Activated CD4-positive, alpha-beta memory T cell treated with anti-CD3 and anti-CD28 coated beads for 36 hours (primary cell): ENCODE measurements at regions of chr6 and their contacts with region 1.

Region 1: DNA sequence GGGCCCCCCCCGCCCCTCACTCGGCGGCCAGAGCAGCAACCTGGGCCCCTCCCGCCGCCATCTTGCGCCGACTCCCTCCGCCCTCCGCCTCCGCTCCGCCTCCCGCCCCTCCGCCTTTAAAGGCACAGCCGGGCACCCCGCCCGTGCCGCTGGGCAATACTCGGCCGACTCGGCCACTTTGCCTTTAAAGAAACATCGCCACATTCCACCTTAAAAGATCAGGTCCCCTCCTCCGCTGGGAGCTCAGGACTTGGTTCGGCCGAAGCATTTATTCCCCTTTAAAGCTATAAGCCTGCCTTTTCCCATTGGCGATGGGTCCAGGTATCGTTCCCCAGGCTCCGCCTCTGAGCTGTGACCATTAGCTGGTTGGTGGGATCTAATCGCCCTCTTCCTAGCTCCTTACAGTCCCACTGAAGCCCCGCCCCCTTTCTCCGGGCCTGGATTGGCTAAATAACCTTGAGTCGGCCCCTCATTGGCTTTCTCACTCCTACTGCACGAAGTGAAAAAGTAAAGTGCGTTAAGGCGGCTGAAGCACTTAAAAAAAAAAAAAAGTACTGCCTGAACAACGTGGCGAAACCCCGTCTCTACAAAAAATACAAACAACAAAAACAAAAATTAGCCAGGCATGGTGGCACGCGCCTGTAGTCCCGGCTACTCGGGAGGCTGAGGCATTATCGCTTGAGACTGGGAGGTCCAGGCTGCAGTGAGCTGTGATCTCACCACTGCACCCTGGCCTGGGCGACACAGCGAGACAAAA is at the start of gene ZBTB22:
- DNase-seq: peak; percentile 97
- H3K4me3 Mint-ChIP-seq: peak within 1 kb of the TSS; percentile 94
- H3K27ac Mint-ChIP-seq: peak within 1 kb of the TSS; percentile 95
- H3K4me1 Mint-ChIP-seq: peaks cover 71% of the 10 kb centered on the region
- H3K27me3 Mint-ChIP-seq: no peaks in the 10 kb centered on the region
- total RNA-seq, gene ZBTB22: 11.0 to 12.1 TPM

Region 2: DNA sequence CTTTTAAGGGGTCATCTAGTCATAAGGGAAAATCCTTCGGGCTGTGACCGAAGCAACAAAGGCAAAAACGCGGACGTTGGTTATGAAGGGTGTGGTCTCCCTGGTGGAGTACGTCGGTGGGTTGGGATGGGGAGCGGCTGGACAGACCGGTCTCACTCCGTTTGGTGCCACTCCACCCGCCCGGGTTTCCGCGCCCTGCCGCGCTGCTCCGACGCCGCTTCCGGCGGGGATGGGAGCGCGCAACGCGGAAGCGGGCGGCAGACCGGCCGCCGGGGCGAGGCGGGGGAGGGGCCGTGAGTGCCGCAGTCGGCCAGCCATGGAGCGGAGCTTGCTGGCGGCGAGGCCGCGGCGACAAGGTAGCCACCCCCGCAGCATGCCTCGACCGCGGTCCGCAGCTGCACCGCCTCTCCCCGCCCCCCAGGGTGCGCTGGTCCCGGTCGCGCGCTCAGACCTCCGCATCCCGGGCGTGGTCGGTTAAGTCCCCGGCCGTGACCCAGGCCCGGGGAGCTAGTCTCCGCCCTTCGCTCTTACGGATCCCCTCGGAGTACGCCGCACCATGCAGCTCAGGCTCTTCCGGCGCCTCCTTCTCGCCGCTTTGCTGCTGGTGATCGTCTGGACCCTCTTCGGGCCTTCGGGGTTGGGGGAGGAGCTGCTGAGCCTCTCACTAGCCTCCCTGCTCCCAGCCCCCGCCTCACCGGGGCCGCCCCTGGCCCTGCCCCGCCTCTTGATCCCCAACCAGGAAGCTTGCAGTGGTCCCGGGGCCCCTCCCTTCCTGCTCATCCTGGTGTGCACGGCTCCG is 40.8 kb before region 1 on chr6 and contains the start of gene B3GALT4:
- CTCF ChIA-PET with region 1: interaction called, 8 read pairs
- POLR2A ChIA-PET with region 1: interaction called, 14 read pairs
- intact Hi-C with region 1: loop called (anchors 1 kb)
- DNase-seq: peak; percentile 85
- H3K4me3 Mint-ChIP-seq: peak within 1 kb of the TSS; percentile 94
- H3K27ac Mint-ChIP-seq: peak within 1 kb of the TSS; percentile 92
- H3K4me1 Mint-ChIP-seq: peaks cover 37% of the 10 kb centered on the region
- H3K27me3 Mint-ChIP-seq: no peaks in the 10 kb centered on the region
- total RNA-seq, gene B3GALT4: 5.9 to 6.7 TPM

Region 3: GRCh38 chr6:33288921-33289748 is 28.7 kb before region 1 on chr6 and contains the starts of genes PFDN6 and WDR46:
- CTCF ChIA-PET with region 1: no interaction called
- POLR2A ChIA-PET with region 1: interaction called, 12 read pairs
- intact Hi-C with region 1: loop called (anchors 1 kb)
- DNase-seq: peak; percentile 89
- H3K4me3 Mint-ChIP-seq: peak within 1 kb of the TSS; percentile 98
- H3K27ac Mint-ChIP-seq: peak within 1 kb of the TSS; percentile 80
- H3K4me1 Mint-ChIP-seq: peaks cover 41% of the 10 kb centered on the region
- H3K27me3 Mint-ChIP-seq: no peaks in the 10 kb centered on the region
- total RNA-seq, gene PFDN6: 78.5 to 90.9 TPM
- total RNA-seq, gene WDR46: 59.4 to 60.7 TPM

Region 4: GRCh38 chr6:33299237-33299944 is 18.5 kb before region 1 on chr6:
- CTCF ChIA-PET with region 1: interaction called, 36 read pairs
- POLR2A ChIA-PET with region 1: interaction called, 13 read pairs
- intact Hi-C with region 1: loop called (anchors 1 kb)
- DNase-seq: peak; percentile 96
- H3K4me3 Mint-ChIP-seq: peak overlapping the region; percentile 89
- H3K27ac Mint-ChIP-seq: peak overlapping the region; percentile 96
- H3K4me1 Mint-ChIP-seq: peaks cover 30% of the 10 kb centered on the region
- H3K27me3 Mint-ChIP-seq: no peaks in the 10 kb centered on the region

Region 5: GRCh38 chr6:33344701-33345697 is 27.2 kb after region 1 on chr6:
- CTCF ChIA-PET with region 1: interaction called, 18 read pairs
- POLR2A ChIA-PET with region 1: interaction called, 4 read pairs
- intact Hi-C with region 1: loop called (anchors 5 kb)
- DNase-seq: peak; percentile 75
- H3K4me3 Mint-ChIP-seq: peak overlapping the region; percentile 73
- H3K27ac Mint-ChIP-seq: peak overlapping the region; percentile 85
- H3K4me1 Mint-ChIP-seq: peaks cover 24% of the 10 kb centered on the region
- H3K27me3 Mint-ChIP-seq: no peaks in the 10 kb centered on the region

Region 6: GRCh38 chr6:33579828-33580714 is 262.2 kb after region 1 on chr6 and contains the start of gene BAK1:
- CTCF ChIA-PET with region 1: no interaction called
- POLR2A ChIA-PET with region 1: no interaction called
- intact Hi-C with region 1: loop called (anchors 10 kb)
- DNase-seq: peak; percentile 93
- H3K4me3 Mint-ChIP-seq: peak within 1 kb of the TSS; percentile 96
- H3K27ac Mint-ChIP-seq: peak within 1 kb of the TSS; percentile 98
- H3K4me1 Mint-ChIP-seq: peaks cover 33% of the 10 kb centered on the region
- H3K27me3 Mint-ChIP-seq: no peaks in the 10 kb centered on the region
- total RNA-seq, gene BAK1: 56.3 to 57.7 TPM